Mucosa of descending colon (tissue), 3 donors: ENCODE measurements at regions of chr22 and their contacts with region 1.

Region 1: GRCh38 chr22:50030297-50031188 is 18.0 kb upstream of the IL17REL start:
- DNase-seq: peak; percentile 79 to 81 (median 80)
- ATAC-seq: peak; percentile 97
- H3K4me3 ChIP-seq: no peak overlapping the region
- H3K4me1 ChIP-seq: no peaks in the 10 kb centered on the region
- CTCF ChIP-seq: peak; percentile 78

Region 2: DNA sequence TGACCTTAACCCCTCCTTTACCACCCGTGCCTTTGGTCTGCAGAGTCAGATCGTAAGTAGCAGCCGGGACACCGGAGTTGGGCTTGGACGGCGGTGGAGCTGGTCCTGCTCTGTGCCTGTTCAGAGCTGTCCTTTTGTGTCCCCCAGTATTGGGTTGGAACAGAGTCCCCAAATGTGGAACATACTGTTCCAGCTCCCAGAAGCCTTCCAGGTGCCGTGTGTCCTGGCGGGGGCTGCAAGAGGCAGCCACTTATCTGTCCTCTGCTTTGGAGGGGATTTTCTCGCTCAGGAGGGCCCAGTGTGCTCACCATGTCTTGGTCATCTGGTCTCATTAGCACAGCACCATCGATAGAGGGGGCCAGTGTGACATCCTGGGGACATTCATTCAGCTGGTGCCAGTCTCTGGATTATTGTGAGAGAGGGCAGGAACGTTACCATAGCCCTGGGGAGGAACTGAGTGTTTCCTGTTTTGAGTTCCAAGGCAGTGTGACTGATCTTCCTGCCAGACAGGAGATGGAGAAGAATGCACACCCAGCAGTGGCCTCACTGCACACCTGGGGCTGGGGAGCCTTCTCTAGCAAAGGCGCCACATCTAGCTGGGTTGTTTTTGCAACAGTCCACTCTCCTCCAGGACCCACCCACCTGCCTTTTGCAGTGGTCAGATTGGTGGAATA is 99.7 kb before region 1 on chr22:
- intact Hi-C with region 1: loop called (anchors 2 to 5 kb)
- DNase-seq: peak in 2 of 3 donors; percentile 74 to 89
- ATAC-seq: peak; percentile 65
- H3K4me3 ChIP-seq: no peak overlapping the region
- H3K4me1 ChIP-seq: peaks cover 35% of the 10 kb centered on the region
- CTCF ChIP-seq: peak; percentile 27